ENCODE measurements at regions of chr10 and their contacts with region 1.

Region 1: GRCh38 chr10:43689955-43690771 is 41.5 kb upstream of the ZNF32 start:
- DNase-seq: peak; percentile 94
- ATAC-seq: peak; percentile 98

Region 2: GRCh38 chr10:44325157-44325556 is 635.0 kb after region 1 on chr10:
- intact Hi-C with region 1: loop called (anchors 10 kb)
- DNase-seq: no peak
- ATAC-seq: peak; percentile 13

Measured in left ventricle myocardium superior (tissue), 1 donor.